ENCODE measurements at regions of chr22 and their contacts with region 1.

Region 1: GRCh38 chr22:37849089-37849751 is at the start of gene EIF3L:
- DNase-seq: peak; percentile 93
- H3K4me3 Mint-ChIP-seq: peak within 1 kb of the TSS; percentile 92
- H3K27ac Mint-ChIP-seq: peak within 1 kb of the TSS; percentile 94
- H3K4me1 Mint-ChIP-seq: peaks cover 50% of the 10 kb centered on the region
- H3K27me3 Mint-ChIP-seq: no peaks in the 10 kb centered on the region
- total RNA-seq, gene EIF3L: 776 to 797 TPM

Region 2: DNA sequence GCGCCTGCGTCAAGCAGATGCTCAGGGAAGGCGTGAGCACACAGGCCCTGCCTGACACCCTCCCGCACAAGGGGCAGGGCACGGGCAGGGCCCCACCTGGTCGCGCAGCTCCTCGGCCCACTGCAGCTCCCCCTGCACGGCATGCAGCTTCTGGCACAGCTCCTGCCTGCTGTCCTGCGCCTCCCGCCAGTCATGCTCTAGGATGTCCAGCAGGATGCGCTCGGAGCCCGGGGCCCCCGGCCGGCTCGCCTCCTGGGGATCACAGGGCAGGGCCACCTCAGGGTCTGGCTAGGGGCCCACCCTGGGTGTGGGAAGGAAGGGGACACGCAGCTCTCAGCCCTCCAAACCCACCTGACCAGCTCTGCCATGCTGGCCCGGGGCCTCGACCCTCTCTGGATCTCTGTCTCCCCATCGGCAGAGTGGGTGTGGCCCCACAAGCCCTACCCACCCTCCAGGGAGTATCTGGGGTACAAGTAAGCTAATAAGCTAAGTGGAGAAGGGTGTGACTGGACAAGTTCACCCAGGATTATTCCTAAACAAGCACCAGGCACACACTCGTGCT is 340.7 kb before region 1 on chr22:
- CTCF ChIA-PET with region 1: no interaction called
- intact Hi-C with region 1: no loop called
- DNase-seq: no peak
- H3K4me3 Mint-ChIP-seq: no peak overlapping the region
- H3K27ac Mint-ChIP-seq: no peak overlapping the region
- H3K4me1 Mint-ChIP-seq: peaks cover under 1% of the 10 kb centered on the region
- H3K27me3 Mint-ChIP-seq: no peaks in the 10 kb centered on the region

Region 3: DNA sequence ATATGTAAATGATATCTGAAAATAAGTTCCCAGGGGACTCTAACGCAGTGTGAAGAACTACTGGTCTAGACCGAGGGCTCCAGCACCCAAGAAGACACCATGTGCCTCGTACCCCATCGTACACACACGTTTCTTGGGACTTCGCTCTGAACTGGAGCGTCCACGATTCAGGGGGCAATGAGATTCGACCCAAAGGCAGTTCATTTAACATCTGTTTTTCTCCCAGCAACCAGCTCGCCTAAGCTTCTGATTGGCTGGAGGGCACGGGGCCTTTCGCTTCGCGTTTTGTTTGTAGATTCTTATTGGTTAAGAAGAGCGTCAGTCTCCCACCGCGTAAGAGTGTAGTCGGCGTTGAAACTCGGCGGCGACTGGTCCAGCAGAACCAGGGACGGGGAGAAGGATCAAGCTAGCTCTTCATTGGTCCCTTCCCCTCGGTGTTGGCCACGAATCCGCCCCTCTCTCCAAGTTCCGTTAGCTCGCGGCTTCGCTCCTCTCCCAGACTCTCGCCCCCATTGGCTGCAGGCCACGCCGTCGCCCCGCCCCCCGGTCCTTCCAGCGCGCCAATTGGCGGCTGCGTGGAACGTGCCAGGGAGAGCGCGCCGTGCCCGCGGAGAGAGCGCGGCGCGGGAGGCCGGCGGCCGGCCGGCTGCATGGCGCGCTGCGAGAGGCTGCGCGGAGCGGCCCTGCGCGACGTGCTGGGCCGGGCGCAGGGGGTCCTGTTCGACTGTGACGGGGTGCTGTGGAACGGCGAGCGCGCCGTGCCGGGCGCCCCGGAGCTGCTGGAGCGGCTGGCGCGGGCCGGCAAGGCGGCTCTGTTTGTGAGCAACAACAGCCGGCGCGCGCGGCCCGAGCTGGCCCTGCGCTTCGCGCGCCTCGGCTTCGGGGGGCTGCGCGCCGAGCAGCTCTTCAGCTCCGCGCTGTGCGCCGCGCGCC is 190.8 kb before region 1 on chr22 and contains the start of gene PDXP:
- CTCF ChIA-PET with region 1: no interaction called
- intact Hi-C with region 1: loop called (anchors 1 kb)
- DNase-seq: peak; percentile 98
- H3K4me3 Mint-ChIP-seq: peak within 1 kb of the TSS; percentile 92
- H3K27ac Mint-ChIP-seq: peak within 1 kb of the TSS; percentile 83
- H3K4me1 Mint-ChIP-seq: peaks cover 39% of the 10 kb centered on the region
- H3K27me3 Mint-ChIP-seq: no peaks in the 10 kb centered on the region
- total RNA-seq, gene PDXP: 17.4 to 19.2 TPM

Region 4: GRCh38 chr22:37777122-37777687 is 72.0 kb before region 1 on chr22:
- CTCF ChIA-PET with region 1: no interaction called
- intact Hi-C with region 1: no loop called
- DNase-seq: no peak
- H3K4me3 Mint-ChIP-seq: no peak overlapping the region
- H3K27ac Mint-ChIP-seq: no peak overlapping the region
- H3K4me1 Mint-ChIP-seq: no peaks in the 10 kb centered on the region
- H3K27me3 Mint-ChIP-seq: no peaks in the 10 kb centered on the region

Region 5: DNA sequence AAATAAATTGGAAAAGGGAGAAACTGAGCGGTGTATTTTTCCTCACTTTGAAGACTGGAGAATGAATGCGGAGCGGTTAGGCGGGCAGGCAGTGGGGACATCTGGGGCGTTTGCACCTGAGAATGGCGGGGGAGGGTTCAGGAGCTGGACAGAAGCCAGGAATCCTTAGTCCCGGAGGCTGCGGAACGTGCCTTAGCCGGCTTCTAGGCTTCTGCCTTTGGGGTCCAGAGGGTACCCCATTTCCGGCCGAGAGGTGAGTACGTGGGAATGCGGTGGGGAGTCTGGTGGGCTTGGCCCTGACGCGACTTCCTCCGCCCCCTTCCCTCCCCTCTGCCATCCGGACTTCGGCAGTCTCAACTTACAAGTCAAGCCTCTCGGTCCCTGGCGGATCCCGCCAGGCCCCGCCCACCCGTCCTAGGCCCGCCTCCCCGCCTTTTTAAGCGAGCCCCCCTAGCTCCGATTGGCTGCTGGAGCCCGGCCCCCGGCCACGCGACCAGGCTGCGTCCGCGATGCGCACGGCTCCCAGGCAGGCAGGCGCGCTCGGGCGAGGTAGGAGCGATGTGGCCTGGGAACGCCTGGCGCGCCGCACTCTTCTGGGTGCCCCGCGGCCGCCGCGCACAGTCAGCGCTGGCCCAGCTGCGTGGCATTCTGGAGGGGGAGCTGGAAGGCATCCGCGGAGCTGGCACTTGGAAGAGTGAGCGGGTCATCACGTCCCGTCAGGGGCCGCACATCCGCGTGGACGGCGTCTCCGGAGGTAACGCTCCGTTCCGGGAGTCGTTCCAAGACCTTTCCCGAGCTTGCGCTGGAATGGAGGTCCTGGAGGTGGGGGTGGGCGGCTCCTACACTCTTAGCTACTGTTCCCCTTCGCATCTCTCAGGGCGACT is 41.6 kb before region 1 on chr22 and contains the start of gene GCAT:
- CTCF ChIA-PET with region 1: interaction called, 6 read pairs
- intact Hi-C with region 1: loop called (anchors 1 kb)
- DNase-seq: peak; percentile 96
- H3K4me3 Mint-ChIP-seq: peak within 1 kb of the TSS; percentile 80
- H3K27ac Mint-ChIP-seq: peak within 1 kb of the TSS; percentile 61
- H3K4me1 Mint-ChIP-seq: peaks cover 45% of the 10 kb centered on the region
- H3K27me3 Mint-ChIP-seq: peaks cover 48% of the 10 kb centered on the region
- total RNA-seq, gene GCAT: 26.9 to 27.2 TPM

Region 6: DNA sequence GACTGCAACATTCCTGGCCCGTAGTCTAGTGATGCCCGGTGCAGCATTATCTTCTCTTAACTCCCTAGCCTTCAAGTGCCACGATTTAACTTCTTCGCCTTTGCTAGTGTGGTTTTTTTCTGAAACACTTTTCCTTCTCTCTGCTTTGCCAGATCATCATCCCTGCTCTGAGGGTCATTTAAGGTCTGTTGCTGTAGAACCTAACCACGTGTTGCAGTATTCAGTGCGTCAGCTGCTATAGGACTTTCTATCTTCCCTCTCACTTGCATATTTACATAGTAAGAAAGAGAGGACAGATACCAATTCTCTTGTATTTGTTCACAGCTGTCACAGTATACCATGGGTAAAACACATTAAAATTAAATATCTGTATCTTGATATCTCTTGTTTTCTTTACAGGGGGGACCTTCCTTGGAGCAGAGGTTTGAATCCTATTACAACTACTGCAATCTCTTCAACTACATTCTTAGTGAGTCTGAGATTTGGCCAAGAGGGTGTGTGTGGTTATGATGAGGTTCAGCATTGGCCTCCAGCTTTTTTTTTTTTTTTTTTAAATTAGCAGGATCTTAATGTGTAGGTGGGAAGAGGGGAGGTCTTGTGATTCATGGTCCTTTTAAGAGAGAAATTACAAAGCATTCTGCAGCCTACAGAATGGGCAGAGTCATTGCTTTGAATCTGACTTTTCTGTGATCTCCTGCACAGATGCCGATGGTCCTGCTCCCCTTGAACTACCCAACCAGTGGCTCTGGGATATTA is 13.5 kb after region 1 on chr22:
- CTCF ChIA-PET with region 1: interaction called, 22 read pairs
- intact Hi-C with region 1: no loop called
- DNase-seq: no peak
- H3K4me3 Mint-ChIP-seq: no peak overlapping the region
- H3K27ac Mint-ChIP-seq: no peak overlapping the region
- H3K4me1 Mint-ChIP-seq: no peaks in the 10 kb centered on the region
- H3K27me3 Mint-ChIP-seq: no peaks in the 10 kb centered on the region

Region 7: DNA sequence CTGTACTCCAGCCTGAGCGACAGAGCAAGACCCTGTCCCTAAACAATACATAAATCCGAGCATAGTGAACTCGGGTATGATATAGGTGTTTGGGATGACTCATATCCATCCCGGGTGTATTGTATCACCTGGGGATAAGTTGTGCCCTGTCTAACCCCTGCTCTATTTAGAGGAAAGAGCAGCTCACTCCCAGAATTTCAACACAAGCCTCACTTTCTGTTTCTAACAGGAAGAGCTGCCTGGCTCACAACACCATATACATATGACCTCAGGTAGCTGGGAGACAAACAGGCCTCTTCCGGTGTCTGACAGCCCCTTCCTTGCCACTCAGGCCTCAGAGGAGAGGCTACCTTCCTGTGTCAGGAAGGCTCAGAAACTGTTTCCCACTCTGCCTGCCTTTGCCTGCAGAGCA is 47.0 kb after region 1 on chr22:
- CTCF ChIA-PET with region 1: no interaction called
- intact Hi-C with region 1: loop called (anchors 1 kb)
- DNase-seq: peak; percentile 79
- H3K4me3 Mint-ChIP-seq: no peak overlapping the region
- H3K27ac Mint-ChIP-seq: peak overlapping the region; percentile 88
- H3K4me1 Mint-ChIP-seq: peaks cover 23% of the 10 kb centered on the region
- H3K27me3 Mint-ChIP-seq: no peaks in the 10 kb centered on the region

Region 8: DNA sequence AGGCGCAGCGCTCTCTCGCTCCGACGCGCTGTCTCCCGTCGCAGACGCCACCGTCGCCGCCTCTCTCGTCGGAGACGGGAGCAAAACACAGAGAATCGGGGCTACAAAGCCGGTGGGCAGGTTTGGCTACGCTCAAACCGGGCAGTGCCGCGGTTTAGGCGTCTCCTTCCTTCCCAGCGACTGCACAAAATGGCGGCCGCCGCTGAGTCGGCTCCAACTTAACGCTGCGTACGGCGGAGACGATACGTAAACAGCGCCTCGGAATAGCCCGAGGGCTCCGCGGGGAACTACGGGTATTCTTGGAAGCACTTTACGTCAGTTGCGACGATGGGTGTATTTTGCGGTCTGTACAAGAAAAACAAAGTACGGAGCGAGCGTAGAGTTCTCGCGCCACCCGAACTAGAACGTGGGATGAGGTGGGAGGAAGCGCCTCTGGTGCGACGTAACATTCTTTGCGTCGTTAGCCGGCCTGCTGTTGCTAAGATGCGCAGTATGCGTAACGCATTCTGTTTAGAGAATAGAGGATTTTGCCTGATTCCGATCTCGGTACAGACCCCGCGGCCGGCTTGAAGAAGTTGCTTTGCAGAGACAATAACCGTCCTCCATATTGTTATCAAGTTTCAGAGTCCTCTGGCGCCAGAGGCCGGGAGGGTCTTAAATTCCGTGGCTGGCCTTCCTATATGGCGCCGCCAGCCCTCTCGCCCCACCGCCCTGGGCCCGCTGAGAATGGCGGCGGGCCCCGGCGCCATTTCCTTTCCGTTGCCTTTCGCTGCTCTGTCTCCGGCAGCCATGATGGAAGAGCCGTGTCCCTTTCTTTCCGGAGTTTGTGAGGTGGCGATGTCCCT is 657.1 kb after region 1 on chr22 and contains the start of gene DDX17:
- CTCF ChIA-PET with region 1: no interaction called
- intact Hi-C with region 1: loop called (anchors 1 kb)
- DNase-seq: peak; percentile 97
- H3K4me3 Mint-ChIP-seq: peak within 1 kb of the TSS; percentile 98
- H3K27ac Mint-ChIP-seq: peak within 1 kb of the TSS; percentile 100
- H3K4me1 Mint-ChIP-seq: peaks cover 36% of the 10 kb centered on the region
- H3K27me3 Mint-ChIP-seq: no peaks in the 10 kb centered on the region
- total RNA-seq, gene DDX17: 319 to 341 TPM

Measured in activated naive CD4-positive, alpha-beta T cell treated with anti-CD3 and anti-CD28 coated beads for 36 hours (primary cell).